Activated naive CD4-positive, alpha-beta T cell treated with anti-CD3 and anti-CD28 coated beads for 36 hours (primary cell): ENCODE measurements at regions of chr1 and their contacts with region 1.

Region 1: DNA sequence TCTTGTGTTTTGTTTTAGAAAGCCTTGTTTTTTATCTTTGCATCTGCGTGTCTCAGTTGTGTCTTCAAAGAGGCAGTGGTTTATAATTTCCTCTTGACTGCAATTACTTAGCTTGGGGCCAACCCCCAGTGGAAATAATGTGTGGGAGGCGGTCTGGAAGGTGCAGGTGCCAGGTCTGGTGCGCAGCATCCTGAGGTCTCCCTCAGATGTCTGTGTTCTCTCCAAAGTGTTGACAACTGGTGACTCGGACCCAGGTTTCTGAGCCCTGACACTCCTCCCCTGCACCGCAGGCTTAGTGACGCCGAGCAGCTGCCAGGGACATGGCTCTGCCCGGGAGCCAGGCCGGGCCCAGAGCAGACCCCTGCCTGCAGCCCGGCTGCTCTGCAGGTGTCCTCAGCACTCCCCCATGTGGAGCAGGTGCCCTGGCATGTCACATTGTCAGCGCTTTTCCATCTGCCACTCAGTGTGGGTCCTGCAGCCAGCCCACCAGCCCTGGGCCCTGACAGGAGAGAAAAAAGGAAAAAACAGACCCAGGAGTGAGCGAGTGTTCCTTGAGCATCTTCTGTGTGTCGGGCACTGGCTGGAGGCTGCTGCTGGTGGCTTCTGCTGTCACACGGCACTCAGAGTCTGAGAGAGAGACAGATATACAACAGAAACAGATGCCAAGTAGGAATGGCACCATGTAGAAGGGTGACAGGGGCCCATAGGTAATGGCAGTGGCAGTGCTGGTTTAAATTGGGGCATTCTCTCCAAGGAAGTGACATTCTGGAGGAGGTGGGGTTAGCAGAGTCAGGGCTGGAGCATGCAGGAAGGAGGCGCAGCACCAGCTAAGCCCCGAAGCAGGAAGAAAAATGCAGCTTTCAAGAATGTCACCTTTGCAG is 24.8 kb upstream of the SELENON start:
- DNase-seq: peak; percentile 97
- H3K4me3 Mint-ChIP-seq: peak overlapping the region; percentile 65
- H3K27ac Mint-ChIP-seq: peak overlapping the region; percentile 84
- H3K4me1 Mint-ChIP-seq: peaks cover 70% of the 10 kb centered on the region
- H3K27me3 Mint-ChIP-seq: no peaks in the 10 kb centered on the region

Region 2: GRCh38 chr1:24987875-24988557 is 787.1 kb before region 1 on chr1:
- CTCF ChIA-PET with region 1: no interaction called
- intact Hi-C with region 1: no loop called
- DNase-seq: peak; percentile 73
- H3K4me3 Mint-ChIP-seq: no peak overlapping the region
- H3K27ac Mint-ChIP-seq: peak overlapping the region; percentile 84
- H3K4me1 Mint-ChIP-seq: peaks cover 95% of the 10 kb centered on the region
- H3K27me3 Mint-ChIP-seq: no peaks in the 10 kb centered on the region

Region 3: DNA sequence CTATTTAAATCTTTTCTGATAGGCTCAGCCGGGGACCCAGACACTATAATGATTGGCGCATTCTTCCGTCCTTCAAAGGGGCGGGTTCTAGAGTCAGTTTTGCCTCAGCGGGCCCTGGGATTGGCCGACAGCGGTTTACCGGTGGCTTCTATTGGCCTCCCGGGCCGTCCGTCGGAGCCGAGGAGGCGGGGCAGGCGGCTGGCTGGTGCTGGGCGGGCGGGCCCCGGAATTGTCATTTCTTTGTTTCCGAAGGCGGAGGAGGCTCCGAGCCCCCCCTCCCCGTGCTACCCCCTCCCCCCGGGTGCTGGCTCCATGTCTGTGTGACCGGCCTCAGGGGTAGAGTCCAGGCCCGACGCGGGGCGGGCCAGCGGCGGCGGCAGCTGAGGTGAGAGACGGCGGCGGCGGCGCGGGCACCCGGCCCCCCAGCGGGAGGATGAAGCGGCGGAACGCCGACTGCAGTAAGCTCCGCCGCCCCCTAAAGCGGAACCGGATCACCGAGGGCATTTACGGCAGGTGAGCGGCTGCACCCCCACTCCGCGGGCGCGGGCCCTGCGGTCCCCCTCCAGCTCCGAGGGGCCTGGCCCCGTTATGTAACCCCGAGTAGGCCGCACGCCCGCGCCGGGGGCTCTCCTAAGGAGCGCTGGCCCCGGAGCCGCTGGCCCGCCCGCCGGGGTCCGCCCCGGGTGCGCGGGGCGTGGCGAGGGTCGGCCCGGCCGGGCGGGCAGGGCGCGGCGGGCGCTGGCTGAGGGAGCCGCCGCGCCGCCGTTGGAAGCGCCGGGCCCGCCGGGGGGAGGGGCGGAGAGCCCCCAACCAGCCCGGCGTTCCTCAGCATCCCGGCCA is 344.3 kb before region 1 on chr1 and contains the start of gene MACO1:
- CTCF ChIA-PET with region 1: no interaction called
- intact Hi-C with region 1: no loop called
- DNase-seq: peak; percentile 98
- H3K4me3 Mint-ChIP-seq: peak within 1 kb of the TSS; percentile 95
- H3K27ac Mint-ChIP-seq: peak within 1 kb of the TSS; percentile 93
- H3K4me1 Mint-ChIP-seq: peaks cover 44% of the 10 kb centered on the region
- H3K27me3 Mint-ChIP-seq: no peaks in the 10 kb centered on the region
- total RNA-seq, gene MACO1: 8.4 to 8.6 TPM

Region 4: GRCh38 chr1:25695090-25695770 is 79.9 kb before region 1 on chr1:
- CTCF ChIA-PET with region 1: interaction called, 3 read pairs
- intact Hi-C with region 1: loop called (anchors 5 kb)
- DNase-seq: no peak
- H3K4me3 Mint-ChIP-seq: peak overlapping the region; percentile 50
- H3K27ac Mint-ChIP-seq: peak overlapping the region; percentile 59
- H3K4me1 Mint-ChIP-seq: peaks cover 50% of the 10 kb centered on the region
- H3K27me3 Mint-ChIP-seq: no peaks in the 10 kb centered on the region

Region 5: GRCh38 chr1:25754470-25755181 is 20.5 kb before region 1 on chr1:
- CTCF ChIA-PET with region 1: interaction called, 3 read pairs
- intact Hi-C with region 1: loop called (anchors 2 kb)
- DNase-seq: peak; percentile 70
- H3K4me3 Mint-ChIP-seq: peak overlapping the region; percentile 20
- H3K27ac Mint-ChIP-seq: peak overlapping the region; percentile 76
- H3K4me1 Mint-ChIP-seq: peaks cover 43% of the 10 kb centered on the region
- H3K27me3 Mint-ChIP-seq: no peaks in the 10 kb centered on the region

Region 6: DNA sequence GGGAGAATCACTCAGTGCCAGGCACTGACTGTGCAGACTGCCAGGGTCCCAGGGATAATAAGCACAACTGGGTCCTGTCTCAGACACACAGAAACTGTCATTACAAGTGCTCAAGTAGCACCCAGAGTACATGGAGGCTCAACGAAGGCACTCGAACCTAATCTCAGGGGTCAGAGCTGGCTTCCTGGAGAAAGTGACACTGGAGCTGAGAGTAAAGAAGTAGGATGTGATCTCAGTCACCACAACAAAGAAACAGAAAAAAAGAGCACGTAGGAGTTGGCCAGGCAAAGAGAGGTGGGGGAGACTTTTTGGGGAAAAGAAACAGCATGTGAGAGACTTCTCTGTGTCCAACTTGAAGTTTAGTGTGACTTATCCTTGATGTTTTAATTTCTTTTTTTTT is 416.6 kb after region 1 on chr1:
- CTCF ChIA-PET with region 1: no interaction called
- intact Hi-C with region 1: no loop called
- DNase-seq: peak; percentile 31
- H3K4me3 Mint-ChIP-seq: no peak overlapping the region
- H3K27ac Mint-ChIP-seq: no peak overlapping the region
- H3K4me1 Mint-ChIP-seq: peaks cover 13% of the 10 kb centered on the region
- H3K27me3 Mint-ChIP-seq: no peaks in the 10 kb centered on the region